ENCODE measurements at regions of chr14 and their contacts with region 1.

Region 1: DNA sequence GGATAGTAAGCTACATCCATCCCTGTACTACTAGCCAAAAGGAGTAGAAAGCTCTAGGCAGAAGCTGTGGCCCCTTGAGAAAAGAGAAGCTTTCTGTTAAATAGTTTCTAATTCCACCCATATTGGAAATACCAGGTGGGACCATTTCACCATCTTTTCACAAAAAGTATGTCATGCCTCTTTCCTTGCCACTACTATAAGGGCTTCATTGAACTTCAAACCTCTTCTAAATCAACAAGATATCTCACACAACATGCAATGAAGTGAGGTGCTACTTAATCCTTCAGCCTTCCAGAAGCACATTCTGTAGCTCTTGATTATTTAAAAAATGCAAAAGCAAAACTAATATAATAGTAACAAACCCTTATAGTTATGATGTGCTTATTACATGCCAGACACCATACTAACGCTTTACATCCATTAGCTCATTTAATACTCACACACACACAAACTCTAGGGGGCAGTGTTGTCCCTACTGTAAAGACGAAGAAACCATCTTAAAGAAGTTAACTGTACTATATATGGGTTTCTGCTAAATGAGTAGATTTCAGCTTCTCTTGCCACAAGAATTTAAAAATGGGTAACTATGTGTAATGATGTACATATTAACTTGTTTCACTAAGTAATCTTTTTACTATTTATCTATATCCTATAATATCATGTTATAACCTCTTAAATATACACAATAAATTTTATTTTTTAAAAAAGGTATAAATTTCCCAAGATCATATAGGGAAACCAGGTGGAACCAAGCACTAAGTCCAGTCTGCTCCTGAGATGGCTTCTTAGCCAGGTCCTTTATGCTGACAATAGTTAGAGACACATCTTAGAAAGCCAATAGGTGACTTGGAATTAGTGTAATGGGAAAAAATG is 124.4 kb downstream of the RPS29 start:
- DNase-seq: peak; percentile 33
- H3K4me3 Mint-ChIP-seq: no peak overlapping the region
- H3K27ac Mint-ChIP-seq: no peak overlapping the region
- H3K4me1 Mint-ChIP-seq: no peaks in the 10 kb centered on the region
- H3K27me3 Mint-ChIP-seq: peaks cover 12% of the 10 kb centered on the region

Region 2: DNA sequence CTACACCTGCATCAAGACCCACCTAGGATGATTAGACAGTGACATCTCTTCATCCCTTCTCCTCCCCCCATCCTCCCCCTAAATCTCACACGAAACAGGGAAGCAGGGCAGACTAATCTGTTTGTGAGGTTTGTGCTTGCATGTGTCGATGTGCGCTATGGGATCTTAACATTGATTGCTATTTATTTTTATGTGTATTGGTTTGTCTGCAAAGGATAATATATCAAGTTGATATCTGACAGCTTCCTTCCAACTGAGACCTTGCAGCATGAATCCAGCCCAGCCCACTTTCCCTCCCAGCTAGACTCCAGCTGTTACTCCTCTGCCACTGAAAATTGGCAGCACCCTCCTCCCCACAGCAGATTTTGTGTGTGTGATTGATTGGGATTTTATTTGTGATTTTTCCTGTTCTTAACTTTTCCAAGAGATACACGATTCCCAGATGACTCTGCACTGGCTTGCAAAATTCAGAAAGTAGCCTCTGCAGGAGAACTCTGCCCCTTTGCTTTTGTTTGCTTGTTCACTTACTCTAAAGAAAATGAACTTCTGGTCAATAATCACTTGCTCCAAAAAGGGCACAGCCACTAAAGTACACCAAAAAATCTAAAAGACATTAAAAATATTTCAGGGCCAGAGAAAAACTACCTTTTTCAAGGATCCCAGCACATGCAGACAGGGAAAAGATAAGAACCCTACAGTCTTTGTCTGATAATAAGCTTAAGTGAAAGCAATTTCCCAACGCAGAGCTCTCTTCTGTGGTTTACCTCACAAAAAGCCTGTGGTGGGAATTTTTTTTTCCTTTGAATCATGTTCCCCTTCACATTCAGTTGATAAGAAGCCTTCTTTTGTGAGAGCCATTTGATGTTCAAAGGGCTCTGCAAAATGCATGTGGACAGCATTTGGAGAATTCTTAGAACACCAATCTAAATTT is 97.7 kb before region 1 on chr14:
- intact Hi-C with region 1: no loop called
- DNase-seq: no peak
- H3K4me3 Mint-ChIP-seq: no peak overlapping the region
- H3K27ac Mint-ChIP-seq: no peak overlapping the region
- H3K4me1 Mint-ChIP-seq: no peaks in the 10 kb centered on the region
- H3K27me3 Mint-ChIP-seq: no peaks in the 10 kb centered on the region

Region 3: DNA sequence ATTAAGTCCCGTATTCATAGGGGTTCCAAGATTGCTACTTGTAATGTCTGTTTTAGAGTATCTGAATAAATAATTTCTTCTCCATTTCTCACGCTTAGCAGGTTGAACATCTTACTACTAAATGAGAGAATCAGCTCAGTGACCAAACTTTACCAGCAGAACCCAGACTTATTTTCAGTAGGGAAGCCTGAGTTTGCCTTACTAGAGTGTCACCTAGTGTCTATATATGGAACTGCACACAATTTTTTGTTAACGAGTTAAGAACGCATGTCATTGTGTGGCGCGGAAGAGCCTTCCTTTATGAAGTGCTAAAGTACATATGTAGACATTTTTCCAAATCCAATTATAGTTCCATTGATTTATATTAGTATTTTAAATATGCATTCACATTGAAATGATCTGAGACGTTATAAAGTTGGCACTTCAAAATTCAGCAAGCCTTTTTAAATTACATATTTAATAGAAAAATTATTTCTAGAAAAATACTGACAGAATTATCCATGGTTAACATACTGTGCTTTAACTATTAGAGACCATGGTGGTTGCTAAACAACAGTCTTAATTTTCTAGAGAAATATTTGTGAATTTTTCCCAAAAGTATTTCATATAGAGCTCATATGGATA is 36.1 kb after region 1 on chr14:
- intact Hi-C with region 1: loop called (anchors 1 kb)
- DNase-seq: no peak
- H3K4me3 Mint-ChIP-seq: no peak overlapping the region
- H3K27ac Mint-ChIP-seq: no peak overlapping the region
- H3K4me1 Mint-ChIP-seq: no peaks in the 10 kb centered on the region
- H3K27me3 Mint-ChIP-seq: peaks cover 17% of the 10 kb centered on the region

Measured in activated T-helper 2 cell treated with anti-CD3 and anti-CD28 coated beads, Interferon-gamma antibody, Interleukin-2, Interleukin-4, amounts not matched to agents 10 μg/mL and 5 μg/mL and 100 μg/mL, durations not matched to agents 14 hours and 24 hours and 36 hours (primary cell).